Breast epithelium (tissue), 4 donors: ENCODE measurements at regions of chr13 and their contacts with region 1.

Region 1: GRCh38 chr13:70896136-70896535 is 787.9 kb upstream of the KLHL1 start:
- DNase-seq: no peak
- H3K4me3 ChIP-seq: no peak overlapping the region
- H3K27ac ChIP-seq: no peak overlapping the region
- H3K4me1 ChIP-seq: no peaks in the 10 kb centered on the region
- H3K27me3 ChIP-seq: no peaks in the 10 kb centered on the region
- CTCF ChIP-seq: no peak
- POLR2A ChIP-seq: no peak

Region 2: DNA sequence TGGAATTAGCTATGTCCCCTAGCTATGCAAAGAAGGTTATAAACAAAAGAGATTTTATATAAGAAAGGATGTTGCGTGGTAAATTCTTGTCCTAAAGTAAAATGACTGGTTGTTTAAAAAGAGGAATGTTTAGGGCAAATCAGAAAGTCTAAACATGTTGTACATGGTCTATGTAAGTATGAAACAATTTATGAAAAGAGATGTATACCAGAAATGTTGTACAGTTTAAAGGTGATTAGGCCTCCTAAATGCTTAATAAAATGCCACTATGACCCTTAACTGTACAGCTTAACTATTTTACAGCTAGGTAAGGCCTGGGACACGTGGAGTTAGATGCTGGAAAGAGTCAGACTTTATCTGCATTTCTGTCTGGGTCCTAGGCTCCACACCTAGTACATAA is 11.9 kb before region 1 on chr13:
- intact Hi-C with region 1: no loop called
- DNase-seq: no peak
- H3K4me3 ChIP-seq: no peak overlapping the region
- H3K27ac ChIP-seq: no peak overlapping the region
- H3K4me1 ChIP-seq: no peaks in the 10 kb centered on the region
- H3K27me3 ChIP-seq: no peaks in the 10 kb centered on the region
- CTCF ChIP-seq: no peak
- POLR2A ChIP-seq: no peak

Region 3: GRCh38 chr13:72648513-72649065 is 1752.5 kb after region 1 on chr13:
- intact Hi-C with region 1: loop called (anchors 5 kb)
- DNase-seq: no peak
- H3K4me3 ChIP-seq: no peak overlapping the region
- H3K27ac ChIP-seq: no peak overlapping the region
- H3K4me1 ChIP-seq: no peaks in the 10 kb centered on the region
- H3K27me3 ChIP-seq: no peaks in the 10 kb centered on the region
- CTCF ChIP-seq: no peak
- POLR2A ChIP-seq: no peak